HEK293 (cell line): ENCODE measurements at regions of chr6 and their contacts with region 1.

Region 1: GRCh38 chr6:133966654-133967329 is 13.8 kb downstream of the TBPL1 start:
- H3K4me3 ChIP-seq: no peak overlapping the region
- H3K27ac ChIP-seq: no peak overlapping the region
- H3K4me1 ChIP-seq: peaks cover 12% of the 10 kb centered on the region
- CTCF ChIP-seq: no peak

Region 2: GRCh38 chr6:133952815-133953633 is 13.8 kb before region 1 on chr6 and contains the start of gene TBPL1:
- CTCF ChIA-PET with region 1: interaction called, 6 read pairs
- POLR2A ChIA-PET with region 1: interaction called, 17 read pairs
- H3K4me3 ChIP-seq: peak within 1 kb of the TSS; percentile 98
- H3K27ac ChIP-seq: peak within 1 kb of the TSS; percentile 70
- H3K4me1 ChIP-seq: peaks cover 18% of the 10 kb centered on the region
- CTCF ChIP-seq: no peak